PC-9 (cell line): ENCODE measurements at regions of chr6 and their contacts with region 1.

Region 1: DNA sequence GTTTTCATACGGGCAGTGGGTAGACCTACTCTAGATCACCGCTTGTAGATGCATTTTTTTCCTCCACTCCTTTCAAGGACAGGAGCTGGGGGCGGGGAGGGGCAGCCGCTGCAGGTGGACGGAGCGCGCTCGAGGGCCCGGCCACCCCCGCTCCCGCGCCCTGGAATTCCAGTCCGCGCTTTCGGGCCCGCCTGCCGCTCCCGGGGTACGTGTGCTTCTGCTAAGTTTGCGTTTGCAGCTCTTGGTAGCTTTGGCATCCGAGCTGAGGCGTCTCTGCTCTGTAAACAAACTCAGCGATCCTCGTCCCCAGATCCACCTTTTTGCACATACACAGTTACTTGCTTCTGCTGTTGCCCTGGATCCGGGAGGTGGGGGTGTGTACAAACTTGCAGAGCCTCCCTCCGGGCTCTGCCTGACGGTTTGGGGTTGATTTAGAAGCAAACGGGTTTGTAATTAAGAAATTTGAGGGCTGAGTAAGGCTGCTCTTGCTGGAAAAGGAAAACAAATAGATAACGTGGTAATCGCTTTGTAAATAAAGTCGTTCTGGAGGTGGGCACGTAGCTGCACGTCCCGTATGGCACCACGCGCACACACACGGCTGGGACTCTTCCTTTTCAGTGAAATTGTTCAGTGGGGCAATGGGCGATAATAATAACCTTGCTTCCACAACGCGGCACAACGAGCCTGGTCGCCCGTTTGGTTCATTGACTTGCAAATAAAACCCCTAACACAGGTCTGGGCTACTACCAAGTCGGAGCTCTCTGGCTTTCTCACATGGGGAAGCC is 976 bp upstream of the CITED2 start:
- DNase-seq: peak; percentile 85 to 100
- H3K4me3 ChIP-seq: peak overlapping the region; percentile 89
- H3K27ac ChIP-seq: peak overlapping the region; percentile 94
- H3K4me1 ChIP-seq: peaks cover 58% of the 10 kb centered on the region
- H3K27me3 ChIP-seq: no peaks in the 10 kb centered on the region
- CTCF ChIP-seq: no peak; the same call in 1 of the 2 replicates

Region 2: GRCh38 chr6:138824482-138825144 is 550.8 kb before region 1 on chr6:
- CTCF ChIA-PET with region 1: no interaction called
- POLR2A ChIA-PET with region 1: no interaction called
- intact Hi-C with region 1: no loop called
- DNase-seq: no peak
- H3K4me3 ChIP-seq: no peak overlapping the region
- H3K27ac ChIP-seq: no peak overlapping the region
- H3K4me1 ChIP-seq: peaks cover 18% of the 10 kb centered on the region
- H3K27me3 ChIP-seq: no peaks in the 10 kb centered on the region
- CTCF ChIP-seq: no peak

Region 3: DNA sequence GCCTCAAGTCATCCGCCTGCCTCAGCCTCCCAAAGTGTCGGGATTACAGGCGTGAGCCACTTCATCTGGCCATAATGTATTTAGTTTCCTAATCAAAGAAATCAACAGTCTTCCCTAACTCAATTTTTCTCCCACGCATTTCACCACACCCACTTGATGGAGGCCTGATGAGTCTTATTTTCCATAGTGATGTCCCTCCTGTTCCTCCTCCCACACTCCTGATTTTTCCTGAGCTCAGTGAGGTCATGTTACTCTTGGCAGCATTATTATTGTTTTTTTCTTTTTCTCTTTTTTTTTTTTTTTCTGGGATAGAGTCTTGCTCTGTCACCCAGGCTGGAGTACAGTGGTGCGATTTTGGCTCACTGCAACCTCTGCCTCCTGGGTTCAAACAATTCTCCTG is 337.9 kb before region 1 on chr6:
- CTCF ChIA-PET with region 1: no interaction called
- POLR2A ChIA-PET with region 1: no interaction called
- intact Hi-C with region 1: no loop called
- DNase-seq: no peak
- H3K4me3 ChIP-seq: no peak overlapping the region
- H3K27ac ChIP-seq: no peak overlapping the region
- H3K4me1 ChIP-seq: no peaks in the 10 kb centered on the region
- H3K27me3 ChIP-seq: no peaks in the 10 kb centered on the region
- CTCF ChIP-seq: no peak

Region 4: GRCh38 chr6:139395891-139396301 is 20.5 kb after region 1 on chr6:
- CTCF ChIA-PET with region 1: no interaction called
- POLR2A ChIA-PET with region 1: no interaction called
- intact Hi-C with region 1: no loop called
- DNase-seq: no peak
- H3K4me3 ChIP-seq: no peak overlapping the region
- H3K27ac ChIP-seq: no peak overlapping the region
- H3K4me1 ChIP-seq: peaks cover 12% of the 10 kb centered on the region; the same call in 1 of the 2 replicates
- H3K27me3 ChIP-seq: no peaks in the 10 kb centered on the region
- CTCF ChIP-seq: no peak

Region 5: GRCh38 chr6:139515511-139515910 is 140.1 kb after region 1 on chr6:
- CTCF ChIA-PET with region 1: no interaction called
- POLR2A ChIA-PET with region 1: interaction called, 9 read pairs
- intact Hi-C with region 1: loop called (anchors 1 kb)
- DNase-seq: no peak
- H3K4me3 ChIP-seq: no peak overlapping the region
- H3K27ac ChIP-seq: no peak overlapping the region
- H3K4me1 ChIP-seq: peaks cover 23% of the 10 kb centered on the region
- H3K27me3 ChIP-seq: no peaks in the 10 kb centered on the region
- CTCF ChIP-seq: no peak

Region 6: DNA sequence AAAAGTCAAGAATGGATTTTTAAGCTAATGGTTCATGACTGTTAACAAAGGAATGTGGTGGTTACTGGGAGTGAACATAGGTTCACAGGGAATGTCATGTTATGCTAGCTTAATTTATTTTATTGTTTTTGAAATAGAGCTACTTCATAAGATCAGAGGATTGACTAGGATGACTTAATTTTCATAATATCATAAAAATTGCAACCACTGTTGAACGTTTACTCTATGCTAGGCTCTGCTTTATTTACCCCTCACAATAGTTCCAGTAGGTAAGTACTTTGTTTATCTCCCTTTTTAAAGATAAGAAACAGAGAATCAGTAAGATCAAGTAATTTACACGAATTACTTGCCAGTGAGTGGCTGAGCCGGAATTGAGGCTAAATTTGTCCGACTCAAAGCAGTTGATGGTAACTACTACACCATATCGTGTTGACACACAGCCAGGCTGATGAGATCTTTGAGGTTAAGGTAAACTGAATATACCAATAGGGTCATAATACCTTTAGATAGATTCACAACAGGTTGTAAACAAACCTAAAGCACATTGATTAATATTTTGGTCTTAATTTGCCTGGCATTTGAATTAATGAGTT is 193.6 kb after region 1 on chr6:
- CTCF ChIA-PET with region 1: no interaction called
- POLR2A ChIA-PET with region 1: interaction called, 10 read pairs
- intact Hi-C with region 1: loop called (anchors 5 kb)
- DNase-seq: peak in 1 of 2 experiments; percentile 87
- H3K4me3 ChIP-seq: no peak overlapping the region; the same call in 1 of the 2 replicates
- H3K27ac ChIP-seq: peak overlapping the region; percentile 76
- H3K4me1 ChIP-seq: peaks cover 21% of the 10 kb centered on the region
- H3K27me3 ChIP-seq: no peaks in the 10 kb centered on the region
- CTCF ChIP-seq: no peak

Region 7: DNA sequence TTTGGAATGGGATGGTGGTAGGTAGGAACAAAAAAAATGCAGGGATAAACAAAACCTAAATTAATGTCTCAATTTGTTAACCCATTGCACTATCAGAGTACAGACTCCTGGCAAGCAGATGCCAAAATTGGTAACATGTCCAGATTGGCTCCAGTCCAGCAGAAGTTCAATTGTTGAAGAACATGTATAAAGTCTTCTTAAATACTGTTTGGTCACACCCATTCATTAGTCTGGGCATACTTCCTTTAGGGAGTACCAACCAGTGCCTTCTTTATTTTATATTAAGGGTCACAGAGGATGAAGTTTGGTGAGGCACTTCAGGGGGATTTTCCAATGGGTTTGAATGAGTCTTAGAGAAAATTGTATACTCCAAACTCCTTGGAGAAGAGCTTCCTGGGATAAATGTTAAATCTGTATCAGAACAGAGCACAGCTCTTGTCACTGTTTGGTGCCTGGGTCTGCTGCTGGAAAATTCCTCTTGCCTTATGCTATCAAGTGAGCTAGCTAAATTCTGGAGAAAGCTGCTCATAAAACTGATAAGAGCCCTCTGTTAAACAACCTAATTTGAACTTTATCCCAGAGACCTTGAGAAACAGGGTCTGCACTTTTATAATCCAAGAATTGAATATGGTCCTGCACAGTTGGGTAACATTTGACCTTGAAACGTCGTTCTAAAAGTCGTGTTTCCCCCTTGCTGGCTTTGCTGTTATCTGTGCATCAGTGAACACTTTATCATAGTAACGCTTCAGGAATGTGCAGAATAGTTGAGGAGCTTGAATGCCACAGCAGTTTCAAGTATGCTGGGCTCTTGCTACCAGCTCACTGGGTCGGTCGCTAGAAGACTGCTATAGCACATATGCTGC is 333.1 kb after region 1 on chr6:
- CTCF ChIA-PET with region 1: no interaction called
- POLR2A ChIA-PET with region 1: interaction called, 5 read pairs
- intact Hi-C with region 1: loop called (anchors 2 kb)
- DNase-seq: peak; percentile 41 to 94
- H3K4me3 ChIP-seq: no peak overlapping the region
- H3K27ac ChIP-seq: peak overlapping the region; percentile 58
- H3K4me1 ChIP-seq: peaks cover 49% of the 10 kb centered on the region
- H3K27me3 ChIP-seq: no peaks in the 10 kb centered on the region
- CTCF ChIP-seq: no peak

Region 8: GRCh38 chr6:140062043-140063020 is 686.9 kb after region 1 on chr6:
- CTCF ChIA-PET with region 1: no interaction called
- POLR2A ChIA-PET with region 1: no interaction called
- intact Hi-C with region 1: loop called (anchors 5 kb)
- DNase-seq: peak; percentile 51 to 97
- H3K4me3 ChIP-seq: peak overlapping the region; percentile 4; the same call in 1 of the 2 replicates
- H3K27ac ChIP-seq: peak overlapping the region; percentile 66
- H3K4me1 ChIP-seq: peaks cover 32% of the 10 kb centered on the region
- H3K27me3 ChIP-seq: no peaks in the 10 kb centered on the region
- CTCF ChIP-seq: no peak